GM12878 (cell line): ENCODE measurements at regions of chr19 and their contacts with region 1.

Region 1: GRCh38 chr19:3557461-3558248 is at the start of gene MFSD12:
- DNase-seq: peak; percentile 57
- ATAC-seq: peak; percentile 94
- H3K4me3 ChIP-seq: peak within 1 kb of the TSS; percentile 99
- H3K27ac ChIP-seq: peak within 1 kb of the TSS; percentile 57
- H3K4me1 ChIP-seq: peaks cover 25% of the 10 kb centered on the region
- H3K27me3 ChIP-seq: no peaks in the 10 kb centered on the region
- CTCF ChIP-seq: no peak
- EP300 ChIP-seq: no peak
- POLR2A ChIP-seq: peak; percentile 86
- RAD21 ChIP-seq: no peak
- polyA plus RNA-seq, gene MFSD12: 0.58 to 1.9 TPM

Region 2: GRCh38 chr19:3512562-3512961 is 45.1 kb before region 1 on chr19:
- CTCF ChIA-PET with region 1: no interaction called
- POLR2A ChIA-PET with region 1: no interaction called
- RAD21 ChIA-PET with region 1: no interaction called
- SMC1A ChIA-PET with region 1: no interaction called
- in situ Hi-C with region 1: no loop called
- intact Hi-C with region 1: no loop called
- DNase-seq: no peak
- ATAC-seq: no peak
- H3K4me3 ChIP-seq: no peak overlapping the region
- H3K27ac ChIP-seq: no peak overlapping the region
- H3K4me1 ChIP-seq: peaks cover 10% of the 10 kb centered on the region; the same call in 1 of the 2 replicates
- H3K27me3 ChIP-seq: no peaks in the 10 kb centered on the region
- CTCF ChIP-seq: no peak
- EP300 ChIP-seq: no peak
- POLR2A ChIP-seq: no peak
- RAD21 ChIP-seq: no peak

Region 3: GRCh38 chr19:3626473-3627350 is 69.1 kb after region 1 on chr19 and contains the start of gene CACTIN:
- CTCF ChIA-PET with region 1: no interaction called
- POLR2A ChIA-PET with region 1: interaction called, 6 read pairs
- RAD21 ChIA-PET with region 1: interaction called, 4 read pairs
- SMC1A ChIA-PET with region 1: no interaction called
- in situ Hi-C with region 1: no loop called
- intact Hi-C with region 1: loop called (anchors 5 kb)
- DNase-seq: peak; percentile 90
- ATAC-seq: peak; percentile 100
- H3K4me3 ChIP-seq: peak within 1 kb of the TSS; percentile 92
- H3K27ac ChIP-seq: peak within 1 kb of the TSS; percentile 99
- H3K4me1 ChIP-seq: peaks cover 8% of the 10 kb centered on the region
- H3K27me3 ChIP-seq: no peaks in the 10 kb centered on the region
- CTCF ChIP-seq: no peak
- EP300 ChIP-seq: 0 out of 4 replicates have a peak, but pooled peaks of 1 of the 2 experiments have one; percentile 20
- POLR2A ChIP-seq: peak; percentile 99
- RAD21 ChIP-seq: no peak
- polyA plus RNA-seq, gene CACTIN: 0.40 to 1.4 TPM